ENCODE measurements at regions of chr6 and their contacts with region 1.

Region 1: GRCh38 chr6:127900935-127901334 is at the start of gene THEMIS:
- DNase-seq: peak; percentile 88
- H3K4me3 Mint-ChIP-seq: peak within 1 kb of the TSS; percentile 90
- H3K27ac Mint-ChIP-seq: peak within 1 kb of the TSS; percentile 95
- H3K4me1 Mint-ChIP-seq: peaks cover 51% of the 10 kb centered on the region
- H3K27me3 Mint-ChIP-seq: no peaks in the 10 kb centered on the region
- total RNA-seq, gene THEMIS: 14.3 and 15.3 TPM in 2 replicates

Region 2: GRCh38 chr6:127606131-127606562 is 294.8 kb before region 1 on chr6:
- intact Hi-C with region 1: no loop called
- DNase-seq: no peak
- H3K4me3 Mint-ChIP-seq: no peak overlapping the region
- H3K27ac Mint-ChIP-seq: no peak overlapping the region
- H3K4me1 Mint-ChIP-seq: no peaks in the 10 kb centered on the region
- H3K27me3 Mint-ChIP-seq: peaks cover 9% of the 10 kb centered on the region

Region 3: DNA sequence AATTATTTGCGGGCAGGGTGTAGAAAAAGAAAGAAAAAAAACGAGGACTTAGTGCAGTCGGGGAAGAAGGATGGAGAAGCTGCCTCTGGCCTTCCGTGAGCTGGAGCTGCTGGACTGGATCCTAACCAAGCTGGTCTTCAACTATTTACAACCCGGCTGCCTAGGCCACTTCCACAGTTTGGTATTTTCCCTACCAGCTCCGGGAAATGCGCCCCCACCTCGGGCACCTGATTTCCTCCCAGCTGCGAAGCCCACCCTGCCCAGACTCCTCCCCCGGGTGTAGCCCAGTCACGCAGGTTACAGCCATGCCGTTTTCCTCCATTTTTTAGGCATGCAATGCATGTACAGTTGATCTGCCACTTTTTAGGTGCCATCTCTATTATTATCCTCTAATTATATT is 21.2 kb before region 1 on chr6:
- intact Hi-C with region 1: loop called (anchors 1 kb)
- DNase-seq: no peak
- H3K4me3 Mint-ChIP-seq: peak overlapping the region; percentile 61
- H3K27ac Mint-ChIP-seq: no peak overlapping the region
- H3K4me1 Mint-ChIP-seq: peaks cover 43% of the 10 kb centered on the region
- H3K27me3 Mint-ChIP-seq: no peaks in the 10 kb centered on the region

Region 4: GRCh38 chr6:127924440-127924839 is 23.5 kb after region 1 on chr6:
- intact Hi-C with region 1: loop called (anchors 1 kb)
- DNase-seq: no peak
- H3K4me3 Mint-ChIP-seq: peak overlapping the region; percentile 15
- H3K27ac Mint-ChIP-seq: peak overlapping the region; percentile 68
- H3K4me1 Mint-ChIP-seq: peaks cover 47% of the 10 kb centered on the region
- H3K27me3 Mint-ChIP-seq: no peaks in the 10 kb centered on the region

Region 5: DNA sequence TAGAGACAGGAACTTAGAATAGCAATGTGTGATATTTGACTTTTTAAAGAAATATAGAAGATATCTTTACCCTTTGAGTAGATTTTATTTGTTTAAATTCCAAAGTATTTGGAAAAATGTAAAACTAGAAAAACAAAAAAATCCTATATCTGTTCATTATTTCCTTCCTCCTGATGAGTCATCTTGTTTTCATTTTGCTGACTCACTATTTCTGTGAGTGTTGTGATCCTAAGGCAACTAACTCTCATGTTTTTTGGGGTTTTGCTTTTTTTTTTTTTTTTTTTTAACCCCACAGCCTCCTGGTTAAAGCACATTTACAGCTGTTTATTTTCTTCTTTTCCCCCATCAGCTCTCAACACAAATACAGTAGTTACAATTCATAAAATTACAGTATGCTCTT is 37.8 kb after region 1 on chr6:
- intact Hi-C with region 1: loop called (anchors 1 kb)
- DNase-seq: no peak
- H3K4me3 Mint-ChIP-seq: no peak overlapping the region
- H3K27ac Mint-ChIP-seq: peak overlapping the region; percentile 61
- H3K4me1 Mint-ChIP-seq: peaks cover 46% of the 10 kb centered on the region
- H3K27me3 Mint-ChIP-seq: no peaks in the 10 kb centered on the region

Region 6: GRCh38 chr6:128098000-128098581 is 197.2 kb after region 1 on chr6:
- intact Hi-C with region 1: loop called (anchors 5 kb)
- DNase-seq: peak; percentile 57
- H3K4me3 Mint-ChIP-seq: no peak overlapping the region
- H3K27ac Mint-ChIP-seq: peak overlapping the region; percentile 64
- H3K4me1 Mint-ChIP-seq: peaks cover 20% of the 10 kb centered on the region
- H3K27me3 Mint-ChIP-seq: no peaks in the 10 kb centered on the region

Measured in activated CD4-positive, alpha-beta T cell treated with anti-CD3 and anti-CD28 coated beads, Interleukin-2, amount 10 ng/mL, durations not matched to agents 24 days and 14 days (primary cell).